PC-3 (cell line): ENCODE measurements at regions of chr7 and their contacts with region 1.

Region 1: GRCh38 chr7:90424720-90425119 is 21.5 kb downstream of the CLDN12 start:
- DNase-seq: no peak
- ATAC-seq: no peak
- H3K4me3 ChIP-seq: no peak overlapping the region
- H3K27ac ChIP-seq: peak overlapping the region; percentile 56
- H3K4me1 ChIP-seq: peaks cover 14% of the 10 kb centered on the region
- H3K27me3 ChIP-seq: no peaks in the 10 kb centered on the region
- CTCF ChIP-seq: no peak

Region 2: DNA sequence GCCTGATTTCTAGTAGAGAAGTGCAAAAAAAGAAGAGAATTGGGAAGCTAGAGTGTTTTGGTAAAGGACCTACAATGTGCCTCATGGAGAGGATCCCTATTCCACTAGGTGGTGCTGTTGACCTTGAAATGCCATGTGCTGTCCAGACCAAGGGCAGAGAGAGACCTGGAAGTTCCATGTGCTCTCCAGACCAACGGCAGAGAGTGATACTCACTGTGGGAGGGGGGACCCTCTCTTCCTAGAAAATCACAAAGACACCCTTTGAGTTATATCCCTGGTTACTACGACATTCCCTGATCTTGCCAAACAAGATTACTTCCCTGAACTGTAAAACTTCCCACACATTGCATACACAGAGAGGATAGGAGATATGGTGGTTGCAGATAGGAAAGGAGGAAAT is 1877.9 kb before region 1 on chr7:
- CTCF ChIA-PET with region 1: no interaction called
- POLR2A ChIA-PET with region 1: no interaction called
- intact Hi-C with region 1: loop called (anchors 5 kb)
- DNase-seq: peak; percentile 62
- ATAC-seq: peak; percentile 82
- H3K4me3 ChIP-seq: no peak overlapping the region
- H3K27ac ChIP-seq: no peak overlapping the region
- H3K4me1 ChIP-seq: no peaks in the 10 kb centered on the region
- H3K27me3 ChIP-seq: no peaks in the 10 kb centered on the region
- CTCF ChIP-seq: peak; percentile 68

Region 3: DNA sequence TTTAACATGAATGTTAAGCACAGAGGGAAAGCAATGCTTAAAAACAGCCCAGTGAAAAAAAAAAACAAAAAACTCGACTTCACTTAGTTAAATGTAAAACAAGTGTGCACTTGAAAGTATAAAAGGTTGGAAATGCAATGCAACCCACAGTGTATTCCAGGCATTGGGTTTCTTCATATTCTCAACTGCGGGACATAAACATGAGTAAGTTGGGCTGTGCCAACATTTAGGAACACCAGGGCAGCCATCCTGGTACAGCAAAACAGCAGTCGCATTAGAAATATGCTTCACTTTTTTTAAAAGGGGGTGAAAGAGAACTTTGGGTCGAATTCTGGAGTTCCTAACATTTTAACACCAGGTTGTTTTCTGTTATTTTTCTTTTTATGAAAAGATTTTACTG is 269.5 kb before region 1 on chr7:
- CTCF ChIA-PET with region 1: interaction called, 7 read pairs
- POLR2A ChIA-PET with region 1: no interaction called
- intact Hi-C with region 1: loop called (anchors 1 kb)
- DNase-seq: no peak
- ATAC-seq: no peak
- H3K4me3 ChIP-seq: peak overlapping the region; percentile 86
- H3K27ac ChIP-seq: no peak overlapping the region
- H3K4me1 ChIP-seq: peaks cover 34% of the 10 kb centered on the region
- H3K27me3 ChIP-seq: no peaks in the 10 kb centered on the region
- CTCF ChIP-seq: no peak

Region 4: GRCh38 chr7:90262438-90262837 is 162.3 kb before region 1 on chr7:
- CTCF ChIA-PET with region 1: interaction called, 6 read pairs
- POLR2A ChIA-PET with region 1: no interaction called
- intact Hi-C with region 1: loop called (anchors 2 kb)
- DNase-seq: peak; percentile 70
- ATAC-seq: peak; percentile 82
- H3K4me3 ChIP-seq: no peak overlapping the region
- H3K27ac ChIP-seq: no peak overlapping the region
- H3K4me1 ChIP-seq: peaks cover 9% of the 10 kb centered on the region
- H3K27me3 ChIP-seq: no peaks in the 10 kb centered on the region
- CTCF ChIP-seq: peak; percentile 57

Region 5: DNA sequence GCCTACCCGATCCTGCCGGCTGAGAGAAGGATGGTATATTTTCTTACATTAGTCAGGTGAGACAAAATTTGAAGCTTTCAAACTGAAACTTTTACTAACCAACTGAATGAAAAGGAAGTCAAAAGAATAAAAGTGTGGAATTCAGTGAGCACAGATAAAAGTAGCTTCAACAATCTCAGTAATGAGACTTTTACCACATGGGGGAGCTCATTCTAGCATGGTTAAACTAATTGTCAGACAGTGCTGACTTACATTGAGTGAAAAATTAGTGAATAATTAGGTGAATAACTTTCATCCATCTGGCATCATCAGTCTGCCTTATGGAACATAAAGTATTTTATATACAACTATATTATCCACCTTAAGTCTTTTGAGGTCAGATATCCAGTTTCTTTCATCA is 112.0 kb before region 1 on chr7:
- CTCF ChIA-PET with region 1: interaction called, 21 read pairs
- POLR2A ChIA-PET with region 1: no interaction called
- intact Hi-C with region 1: loop called (anchors 1 kb)
- DNase-seq: peak; percentile 19
- ATAC-seq: peak; percentile 64
- H3K4me3 ChIP-seq: no peak overlapping the region
- H3K27ac ChIP-seq: no peak overlapping the region
- H3K4me1 ChIP-seq: 0 out of 2 replicates have a peak, but pooled peaks cover 3% of the 10 kb centered on the region
- H3K27me3 ChIP-seq: no peaks in the 10 kb centered on the region
- CTCF ChIP-seq: peak; percentile 54

Region 6: GRCh38 chr7:90346336-90347125 is 78.2 kb before region 1 on chr7 and contains the start of gene GTPBP10:
- CTCF ChIA-PET with region 1: no interaction called
- POLR2A ChIA-PET with region 1: interaction called, 4 read pairs
- intact Hi-C with region 1: loop called (anchors 2 kb)
- DNase-seq: peak; percentile 95
- ATAC-seq: peak; percentile 95
- H3K4me3 ChIP-seq: peak within 1 kb of the TSS; percentile 96
- H3K27ac ChIP-seq: peak within 1 kb of the TSS; percentile 64
- H3K4me1 ChIP-seq: peaks cover 14% of the 10 kb centered on the region; the same call in 1 of the 2 replicates
- H3K27me3 ChIP-seq: no peaks in the 10 kb centered on the region
- CTCF ChIP-seq: peak; percentile 74
- total RNA-seq, gene GTPBP10: 13.0 and 23.5 TPM in 2 replicates

Region 7: DNA sequence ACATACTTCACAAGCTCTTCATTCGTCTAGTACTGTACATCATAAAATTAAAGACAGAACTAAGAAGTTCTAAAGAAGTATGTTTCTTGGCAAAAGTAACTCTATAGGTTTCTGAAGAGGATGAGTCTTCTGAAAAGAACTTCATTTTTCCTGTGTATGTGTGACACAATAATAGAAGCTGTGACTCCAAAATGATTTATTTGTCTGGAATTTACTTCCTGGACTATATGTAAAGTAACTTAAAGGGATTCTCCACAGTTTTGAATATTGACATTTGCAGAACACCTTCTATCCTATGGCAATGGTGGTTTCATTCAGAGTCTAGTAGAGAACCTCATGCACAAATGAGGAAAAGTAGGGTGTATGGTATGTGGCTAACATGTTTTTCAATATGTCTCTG is 41.3 kb before region 1 on chr7:
- CTCF ChIA-PET with region 1: interaction called, 3 read pairs
- POLR2A ChIA-PET with region 1: no interaction called
- intact Hi-C with region 1: loop called (anchors 1 kb)
- DNase-seq: peak; percentile 79
- ATAC-seq: peak; percentile 63
- H3K4me3 ChIP-seq: peak overlapping the region; percentile 36; the same call in 1 of the 2 replicates
- H3K27ac ChIP-seq: peak overlapping the region; percentile 83
- H3K4me1 ChIP-seq: peaks cover 52% of the 10 kb centered on the region
- H3K27me3 ChIP-seq: no peaks in the 10 kb centered on the region
- CTCF ChIP-seq: no peak

Region 8: DNA sequence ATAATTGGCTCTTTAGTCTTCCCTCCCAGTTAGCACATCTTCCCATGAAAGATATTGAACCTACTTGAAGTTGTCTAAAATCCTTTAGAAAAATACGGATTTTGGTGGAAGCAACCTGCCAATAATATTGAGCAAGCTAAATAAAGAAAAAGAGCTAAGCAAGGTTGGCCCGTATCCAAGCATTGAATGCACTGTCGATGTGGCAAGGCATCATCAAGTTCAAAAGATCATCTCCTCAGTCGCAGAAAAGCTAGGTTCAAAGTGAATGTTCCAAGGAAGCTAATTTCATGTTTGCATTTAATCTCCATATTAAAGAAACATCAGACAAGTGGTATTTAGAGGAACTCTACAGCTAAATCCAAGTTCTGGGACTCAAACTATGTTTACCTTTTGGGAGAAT is 1249.8 kb after region 1 on chr7:
- CTCF ChIA-PET with region 1: no interaction called
- POLR2A ChIA-PET with region 1: no interaction called
- intact Hi-C with region 1: no loop called
- DNase-seq: no peak
- ATAC-seq: no peak
- H3K4me3 ChIP-seq: no peak overlapping the region
- H3K27ac ChIP-seq: no peak overlapping the region
- H3K4me1 ChIP-seq: no peaks in the 10 kb centered on the region
- H3K27me3 ChIP-seq: no peaks in the 10 kb centered on the region
- CTCF ChIP-seq: no peak